ENCODE measurements at regions of chrX and their contacts with region 1.

Region 1: GRCh38 chrX:25144043-25144940 is 128.5 kb upstream of the ARX start:
- DNase-seq: peak; percentile 72
- H3K4me3 ChIP-seq: no peak overlapping the region
- H3K27ac ChIP-seq: no peak overlapping the region
- H3K4me1 ChIP-seq: no peaks in the 10 kb centered on the region
- H3K27me3 ChIP-seq: no peaks in the 10 kb centered on the region
- CTCF ChIP-seq: peak; percentile 14 to 56 (median 24)
- EP300 ChIP-seq: no peak
- POLR2A ChIP-seq: no peak

Region 2: GRCh38 chrX:24395775-24396174 is 748.5 kb before region 1 on chrX:
- intact Hi-C with region 1: loop called (anchors 10 kb)
- DNase-seq: no peak
- H3K4me3 ChIP-seq: no peak overlapping the region
- H3K27ac ChIP-seq: peak overlapping the region; percentile 68 to 78 (median 72)
- H3K4me1 ChIP-seq: peaks cover 0 to 26% (median 8%) of the 10 kb centered on the region in 4 donors
- H3K27me3 ChIP-seq: no peaks in the 10 kb centered on the region
- CTCF ChIP-seq: peak; percentile 56 to 76 (median 73)
- EP300 ChIP-seq: no peak
- POLR2A ChIP-seq: no peak

Region 3: GRCh38 chrX:24838629-24839028 is 305.7 kb before region 1 on chrX:
- intact Hi-C with region 1: loop called (anchors 2 kb)
- DNase-seq: no peak
- H3K4me3 ChIP-seq: no peak overlapping the region
- H3K27ac ChIP-seq: no peak overlapping the region
- H3K4me1 ChIP-seq: no peaks in the 10 kb centered on the region
- H3K27me3 ChIP-seq: no peaks in the 10 kb centered on the region
- CTCF ChIP-seq: peak; percentile 11 to 42 (median 26)
- EP300 ChIP-seq: no peak
- POLR2A ChIP-seq: no peak